Cardiac septum (tissue), 1 donor: ENCODE measurements at regions of chr1 and their contacts with region 1.

Region 1: DNA sequence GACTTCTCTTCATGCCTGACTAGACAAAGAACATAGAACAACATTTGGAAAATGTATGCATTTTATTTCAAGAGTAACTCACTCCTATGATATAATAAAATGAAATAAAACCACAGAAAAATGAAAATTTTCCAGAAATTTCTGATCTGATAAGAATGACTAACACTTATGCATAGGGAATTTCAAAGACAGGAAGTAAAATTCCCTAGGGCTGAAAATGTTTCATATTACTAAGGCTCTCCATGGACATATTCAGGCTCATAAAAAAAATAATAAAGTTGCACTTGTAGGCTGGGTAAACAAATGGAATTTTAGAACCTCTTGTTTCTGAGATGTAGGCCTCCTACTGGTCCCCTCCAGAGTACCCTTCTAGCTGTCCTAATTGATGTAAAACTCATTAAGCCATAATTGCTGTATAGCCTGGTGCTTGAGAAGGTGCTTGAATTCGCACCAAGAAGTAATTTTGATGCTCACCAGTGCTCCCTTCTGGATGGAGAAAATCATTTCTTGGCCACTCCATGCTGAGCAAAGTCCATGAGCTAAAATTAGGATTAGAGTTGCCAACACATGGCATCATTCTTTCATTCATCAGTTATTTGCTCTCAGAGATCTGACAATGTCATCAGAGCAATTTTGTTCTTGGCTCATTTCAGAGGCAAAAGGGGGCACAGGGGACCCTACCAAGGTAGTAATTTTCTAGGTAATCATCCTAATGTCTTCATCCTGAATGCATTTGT is 641.0 kb upstream of the CAMK1G start:
- DNase-seq: no peak

Region 2: GRCh38 chr1:208681878-208682663 is 260.5 kb before region 1 on chr1:
- intact Hi-C with region 1: loop called (anchors 10 kb)
- DNase-seq: no peak